ENCODE measurements at regions of chr3 and their contacts with region 1.

Region 1: DNA sequence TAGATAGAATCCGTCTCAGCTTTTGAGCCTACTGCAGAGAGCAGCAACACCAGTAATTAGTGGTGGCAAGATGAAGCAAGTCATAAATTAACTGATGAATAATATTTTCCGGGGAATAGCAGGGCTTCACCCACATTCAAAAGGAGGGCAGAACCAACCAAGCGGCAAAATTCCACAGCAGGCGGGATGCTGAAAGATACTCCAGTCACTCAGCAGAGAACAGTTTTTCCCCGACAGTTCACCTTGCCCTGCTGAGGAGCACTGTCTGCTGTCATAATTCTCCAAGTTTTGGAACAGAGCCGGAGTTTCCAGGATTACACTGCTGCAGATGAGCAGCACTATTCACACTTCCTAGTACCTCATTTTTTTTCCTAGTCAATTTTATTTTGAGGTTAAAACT is 274.7 kb downstream of the CD47 start:
- DNase-seq: no peak
- ATAC-seq: no peak
- H3K4me3 Mint-ChIP-seq: no peak overlapping the region
- H3K27ac Mint-ChIP-seq: no peak overlapping the region
- H3K4me1 Mint-ChIP-seq: no peaks in the 10 kb centered on the region
- H3K27me3 Mint-ChIP-seq: peaks cover 3% of the 10 kb centered on the region

Region 2: GRCh38 chr3:108117241-108117775 is 301.2 kb after region 1 on chr3:
- CTCF ChIA-PET with region 1: no interaction called
- POLR2A ChIA-PET with region 1: interaction called, 18 read pairs
- intact Hi-C with region 1: no loop called
- DNase-seq: peak; percentile 28
- ATAC-seq: peak; percentile 53
- H3K4me3 Mint-ChIP-seq: no peak overlapping the region
- H3K27ac Mint-ChIP-seq: peak overlapping the region; percentile 66
- H3K4me1 Mint-ChIP-seq: peaks cover 42% of the 10 kb centered on the region
- H3K27me3 Mint-ChIP-seq: no peaks in the 10 kb centered on the region